ENCODE measurements at regions of chr10 and their contacts with region 1.

Region 1: DNA sequence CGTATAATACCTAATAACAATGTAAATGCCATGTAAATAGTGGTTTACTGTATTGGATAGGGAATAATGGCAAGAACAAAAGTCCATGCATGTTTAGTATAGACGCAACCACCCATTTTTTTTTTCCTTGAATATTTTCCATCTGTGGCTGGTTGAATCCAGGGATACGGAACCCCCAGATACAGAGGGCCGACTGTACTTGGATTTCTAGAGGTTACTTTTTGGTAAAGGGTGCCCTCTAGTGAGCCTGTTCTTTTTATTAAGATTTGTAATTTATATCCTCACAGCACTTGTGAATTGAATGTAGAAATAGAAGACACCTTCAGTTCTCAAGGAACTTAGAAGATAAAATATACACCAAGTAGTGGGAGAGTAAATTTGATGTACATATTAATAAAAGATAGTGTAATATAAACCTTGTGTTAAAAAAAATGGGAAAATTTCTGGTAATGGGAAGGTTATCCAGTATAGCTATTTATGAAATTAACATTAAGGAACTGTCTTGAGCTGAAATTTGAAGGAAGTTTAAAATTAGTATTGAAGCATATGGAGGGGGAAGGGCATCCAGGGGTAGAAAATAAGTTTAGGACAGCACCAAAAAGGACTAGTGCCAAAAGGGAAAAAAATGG is 32.0 kb downstream of the EXOC6 start:
- DNase-seq: peak; percentile 63
- ATAC-seq: peak; percentile 92
- H3K4me3 ChIP-seq: no peak overlapping the region
- H3K27ac ChIP-seq: no peak overlapping the region
- H3K4me1 ChIP-seq: no peaks in the 10 kb centered on the region
- H3K27me3 ChIP-seq: no peaks in the 10 kb centered on the region
- CTCF ChIP-seq: peak; percentile 73
- POLR2A ChIP-seq: no peak
- RAD21 ChIP-seq: peak; percentile 74

Region 2: DNA sequence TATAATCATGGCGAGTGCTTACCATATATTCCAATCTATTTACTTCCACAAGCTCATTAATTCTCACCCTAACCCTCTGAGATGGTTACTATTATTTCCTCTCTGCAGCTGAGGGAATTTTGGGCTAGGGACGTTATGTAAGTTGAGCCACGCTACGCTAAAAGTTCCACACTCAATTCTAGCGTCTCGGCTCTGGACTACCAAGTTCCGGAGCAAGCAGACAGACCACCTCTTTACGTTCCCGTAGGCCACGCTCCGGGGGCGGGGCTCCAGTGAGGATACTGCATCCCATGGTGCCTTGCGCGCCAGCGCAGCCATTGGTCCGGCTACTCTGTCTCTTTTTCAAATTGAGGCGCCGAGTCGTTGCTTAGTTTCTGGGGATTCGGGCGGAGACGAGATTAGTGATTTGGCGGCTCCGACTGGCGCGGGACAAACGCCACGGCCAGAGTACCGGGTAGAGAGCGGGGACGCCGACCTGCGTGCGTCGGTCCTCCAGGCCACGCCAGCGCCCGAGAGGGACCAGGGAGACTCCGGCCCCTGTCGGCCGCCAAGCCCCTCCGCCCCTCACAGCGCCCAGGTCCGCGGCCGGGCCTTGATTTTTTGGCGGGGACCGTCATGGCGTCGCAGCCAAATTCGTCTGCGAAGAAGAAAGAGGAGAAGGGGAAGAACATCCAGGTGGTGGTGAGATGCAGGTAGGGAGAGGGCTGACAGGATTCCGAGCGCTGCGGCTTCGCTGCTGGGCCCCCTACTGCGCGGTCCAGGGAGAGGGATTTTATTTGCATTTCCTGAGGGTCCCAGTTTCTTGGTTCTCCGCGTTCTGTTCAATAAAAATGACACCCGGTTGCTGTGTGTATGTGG is 287.4 kb before region 1 on chr10 and contains the start of gene KIF11:
- CTCF ChIA-PET with region 1: interaction called, 3 read pairs
- POLR2A ChIA-PET with region 1: interaction called, 3 read pairs
- dilution Hi-C with region 1: no loop called
- in situ Hi-C with region 1: no loop called
- intact Hi-C with region 1: loop called (anchors 2 kb)
- DNase-seq: peak; percentile 96
- ATAC-seq: peak; percentile 93
- H3K4me3 ChIP-seq: peak within 1 kb of the TSS; percentile 78
- H3K27ac ChIP-seq: peak within 1 kb of the TSS; percentile 86
- H3K4me1 ChIP-seq: peaks cover 7% of the 10 kb centered on the region
- H3K27me3 ChIP-seq: no peaks in the 10 kb centered on the region
- CTCF ChIP-seq: no peak
- POLR2A ChIP-seq: peak; percentile 47
- RAD21 ChIP-seq: no peak
- total RNA-seq, gene KIF11: 18.3 and 35.0 TPM in 2 replicates

Region 3: GRCh38 chr10:92848441-92849233 is 31.7 kb before region 1 on chr10 and contains the start of gene EXOC6:
- CTCF ChIA-PET with region 1: interaction called, 6 read pairs
- POLR2A ChIA-PET with region 1: no interaction called
- dilution Hi-C with region 1: no loop called
- in situ Hi-C with region 1: no loop called
- intact Hi-C with region 1: loop called (anchors 1 kb)
- DNase-seq: peak; percentile 74
- ATAC-seq: peak; percentile 87
- H3K4me3 ChIP-seq: peak within 1 kb of the TSS; percentile 94
- H3K27ac ChIP-seq: peak within 1 kb of the TSS; percentile 81
- H3K4me1 ChIP-seq: peaks cover 2% of the 10 kb centered on the region; the same call in 1 of the 2 replicates
- H3K27me3 ChIP-seq: no peaks in the 10 kb centered on the region
- CTCF ChIP-seq: no peak
- POLR2A ChIP-seq: peak; percentile 45; the same call in 1 of the 2 replicates
- RAD21 ChIP-seq: no peak
- total RNA-seq, gene EXOC6: 11.5 and 29.2 TPM in 2 replicates

Region 4: DNA sequence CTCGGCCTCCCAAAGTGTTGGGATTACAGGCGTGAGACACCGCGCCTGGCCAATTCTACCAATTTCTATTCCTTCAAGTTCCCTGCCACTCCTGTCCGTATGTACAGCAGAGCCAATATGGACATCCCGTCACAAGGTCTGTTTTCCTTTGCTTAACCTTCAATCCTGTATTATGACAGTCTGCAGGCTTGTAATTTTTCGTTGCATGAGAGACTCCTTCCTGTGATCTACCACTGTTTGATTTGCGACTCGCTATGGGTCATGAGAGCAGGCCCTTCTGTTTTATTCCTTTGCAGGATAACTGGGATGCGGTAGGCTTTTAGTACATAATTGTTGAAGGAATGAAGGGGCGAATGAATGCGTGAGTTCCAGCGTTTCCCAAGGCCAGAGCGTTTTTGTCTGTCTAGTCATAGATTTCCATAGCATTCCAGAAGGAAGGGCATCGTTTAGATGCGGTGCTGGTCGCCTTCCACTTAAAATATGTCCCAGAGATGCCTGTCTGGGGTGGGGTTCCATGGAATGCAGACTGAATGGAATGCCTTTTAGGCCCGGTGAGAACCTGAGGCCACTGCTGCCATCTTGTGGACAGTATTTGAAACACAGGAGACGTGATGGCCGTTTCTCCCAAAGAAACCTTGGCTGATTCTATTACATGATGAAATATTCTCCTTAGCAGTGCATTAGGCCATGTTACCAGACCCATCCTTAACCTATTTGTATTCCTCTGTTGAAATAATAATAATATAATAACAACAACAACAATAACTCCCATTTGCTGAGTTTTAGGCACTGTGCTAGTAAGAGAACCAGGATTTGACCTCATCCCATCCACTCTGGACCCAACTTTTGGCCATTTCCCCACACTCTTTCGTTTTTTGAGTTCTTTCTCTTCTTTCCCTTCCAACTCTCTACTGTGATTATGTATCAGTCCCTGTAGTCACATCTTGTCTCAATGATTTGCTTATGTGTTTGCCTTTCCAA is 408.6 kb after region 1 on chr10:
- CTCF ChIA-PET with region 1: no interaction called
- POLR2A ChIA-PET with region 1: no interaction called
- dilution Hi-C with region 1: no loop called
- in situ Hi-C with region 1: no loop called
- intact Hi-C with region 1: loop called (anchors 2 kb)
- DNase-seq: peak; percentile 84
- ATAC-seq: peak; percentile 95
- H3K4me3 ChIP-seq: no peak overlapping the region
- H3K27ac ChIP-seq: 0 out of 2 replicates have a peak overlapping the region, but pooled peaks have one; percentile 7
- H3K4me1 ChIP-seq: no peaks in the 10 kb centered on the region
- H3K27me3 ChIP-seq: no peaks in the 10 kb centered on the region
- CTCF ChIP-seq: peak; percentile 86
- POLR2A ChIP-seq: no peak
- RAD21 ChIP-seq: peak; percentile 85

Region 5: GRCh38 chr10:93503075-93503474 is 622.7 kb after region 1 on chr10:
- CTCF ChIA-PET with region 1: no interaction called
- POLR2A ChIA-PET with region 1: no interaction called
- dilution Hi-C with region 1: no loop called
- in situ Hi-C with region 1: loop called (anchors 25 kb)
- intact Hi-C with region 1: no loop called
- DNase-seq: no peak
- ATAC-seq: no peak; the same call in 1 of the 2 replicates
- H3K4me3 ChIP-seq: no peak overlapping the region
- H3K27ac ChIP-seq: no peak overlapping the region; the same call in 1 of the 2 replicates
- H3K4me1 ChIP-seq: peaks cover 3% of the 10 kb centered on the region; the same call in 1 of the 2 replicates
- H3K27me3 ChIP-seq: no peaks in the 10 kb centered on the region
- CTCF ChIP-seq: no peak
- POLR2A ChIP-seq: no peak
- RAD21 ChIP-seq: no peak

Measured in IMR-90 (cell line).